Adrenal gland (tissue), 19 donors: ENCODE measurements at regions of chr6 and their contacts with region 1.

Region 1: DNA sequence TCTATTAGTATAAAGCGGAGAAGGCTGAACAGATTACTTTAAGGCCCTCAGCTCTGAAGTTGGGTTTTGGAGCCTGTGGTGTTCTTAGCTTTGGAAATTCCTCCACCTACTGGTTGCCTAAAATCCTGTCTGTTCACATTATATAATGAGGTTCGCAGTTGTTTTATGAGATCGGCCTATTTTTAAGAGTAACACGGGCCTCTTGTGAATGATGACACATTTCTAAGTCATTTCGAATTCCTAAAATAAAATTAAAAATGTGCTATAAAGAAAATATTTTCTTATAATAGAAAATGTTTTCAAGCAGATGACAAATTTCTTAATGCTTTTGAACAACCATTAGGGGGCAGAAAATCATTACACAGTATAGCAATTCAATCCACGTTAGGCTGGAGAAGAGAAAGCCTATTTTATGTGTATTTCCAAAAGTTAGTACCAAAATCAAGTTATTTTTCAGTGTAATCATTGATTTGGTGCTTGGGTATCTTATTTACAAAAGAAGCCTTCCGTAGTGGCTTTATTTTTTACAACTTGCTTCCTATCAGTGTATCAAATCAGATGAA is 15.8 kb upstream of the FAM8A1 start:
- DNase-seq: peak; percentile 44 to 63 (median 51)
- H3K4me3 ChIP-seq: peak overlapping the region in 1 of 4 donors; percentile 9
- H3K27ac ChIP-seq: peak overlapping the region in 3 of 5 donors; percentile 30 to 40 (median 33)
- H3K4me1 ChIP-seq: peaks cover 0 to 5% of the 10 kb centered on the region in 2 donors
- H3K27me3 ChIP-seq: no peaks in the 10 kb centered on the region
- CTCF ChIP-seq: peak; percentile 76 to 99 (median 90)
- POLR2A ChIP-seq: no peak

Region 2: GRCh38 chr6:17156112-17156921 is 428.0 kb before region 1 on chr6:
- intact Hi-C with region 1: loop called (anchors 2 to 5 kb)
- DNase-seq: peak; percentile 47 to 89 (median 72)
- H3K4me3 ChIP-seq: no peak overlapping the region
- H3K27ac ChIP-seq: no peak overlapping the region
- H3K4me1 ChIP-seq: no peaks in the 10 kb centered on the region
- H3K27me3 ChIP-seq: no peaks in the 10 kb centered on the region
- CTCF ChIP-seq: peak; percentile 55 to 88 (median 82)
- POLR2A ChIP-seq: no peak

Region 3: GRCh38 chr6:17790489-17790888 is 206.2 kb after region 1 on chr6:
- intact Hi-C with region 1: loop called in 1 of 2 experiments (anchors 10 kb)
- DNase-seq: no peak
- H3K4me3 ChIP-seq: no peak overlapping the region
- H3K27ac ChIP-seq: no peak overlapping the region
- H3K4me1 ChIP-seq: no peaks in the 10 kb centered on the region
- H3K27me3 ChIP-seq: no peaks in the 10 kb centered on the region
- CTCF ChIP-seq: no peak
- POLR2A ChIP-seq: no peak